HEK293 (cell line): ENCODE measurements at regions of chr1 and their contacts with region 1.

Region 1: DNA sequence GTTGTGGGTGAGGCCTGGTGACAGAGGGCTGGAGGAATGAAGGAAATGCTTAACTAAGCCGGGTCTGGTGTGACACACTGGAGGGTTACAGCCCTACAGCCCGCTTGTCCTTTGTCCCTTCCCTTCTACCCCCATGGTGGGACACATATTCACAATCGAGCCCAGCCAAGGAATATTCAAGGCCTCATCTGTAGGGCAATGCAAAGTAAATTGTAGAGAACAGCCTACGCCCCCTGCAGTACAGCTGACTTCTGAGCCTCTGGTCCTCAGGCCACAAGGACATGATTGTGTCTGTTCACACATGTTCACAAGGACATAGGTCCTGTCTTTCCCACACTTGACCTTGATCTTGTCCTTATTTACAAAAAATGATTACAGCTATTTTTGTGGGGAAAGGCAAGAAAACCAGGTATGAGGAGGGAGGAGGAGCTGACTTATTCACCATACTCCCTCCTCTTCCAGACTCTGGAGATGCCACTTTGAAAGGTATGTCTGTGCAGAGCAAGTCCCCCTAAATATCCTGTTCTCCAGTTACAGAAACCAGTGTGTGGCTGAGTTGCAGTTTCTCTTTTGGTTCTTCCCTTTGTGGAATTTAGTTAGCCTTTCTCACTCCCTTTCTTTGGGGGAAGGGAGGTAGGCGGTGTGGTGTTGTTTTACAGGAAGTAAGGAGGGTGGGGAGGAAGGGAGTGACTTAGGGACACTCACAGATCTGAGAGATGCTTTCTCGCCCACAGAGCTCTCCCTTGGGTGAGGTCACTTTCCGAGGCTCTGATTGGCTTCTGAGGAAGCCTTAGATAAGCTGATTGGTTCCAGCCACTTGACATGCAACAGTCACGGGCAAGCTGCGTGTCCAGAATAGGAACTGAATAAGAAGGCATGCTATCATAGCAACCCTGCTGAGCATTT is 14.6 kb downstream of the POLR3GL start:
- H3K4me3 ChIP-seq: no peak overlapping the region
- H3K27ac ChIP-seq: peak overlapping the region; percentile 60
- H3K4me1 ChIP-seq: peaks cover 6% of the 10 kb centered on the region
- CTCF ChIP-seq: no peak; the same call in 1 of the 2 replicates

Region 2: GRCh38 chr1:145804235-145805045 is 174.7 kb before region 1 on chr1:
- CTCF ChIA-PET with region 1: no interaction called
- POLR2A ChIA-PET with region 1: no interaction called
- H3K4me3 ChIP-seq: no peak overlapping the region
- H3K27ac ChIP-seq: no peak overlapping the region
- H3K4me1 ChIP-seq: peaks cover 15% of the 10 kb centered on the region
- CTCF ChIP-seq: no peak

Region 3: DNA sequence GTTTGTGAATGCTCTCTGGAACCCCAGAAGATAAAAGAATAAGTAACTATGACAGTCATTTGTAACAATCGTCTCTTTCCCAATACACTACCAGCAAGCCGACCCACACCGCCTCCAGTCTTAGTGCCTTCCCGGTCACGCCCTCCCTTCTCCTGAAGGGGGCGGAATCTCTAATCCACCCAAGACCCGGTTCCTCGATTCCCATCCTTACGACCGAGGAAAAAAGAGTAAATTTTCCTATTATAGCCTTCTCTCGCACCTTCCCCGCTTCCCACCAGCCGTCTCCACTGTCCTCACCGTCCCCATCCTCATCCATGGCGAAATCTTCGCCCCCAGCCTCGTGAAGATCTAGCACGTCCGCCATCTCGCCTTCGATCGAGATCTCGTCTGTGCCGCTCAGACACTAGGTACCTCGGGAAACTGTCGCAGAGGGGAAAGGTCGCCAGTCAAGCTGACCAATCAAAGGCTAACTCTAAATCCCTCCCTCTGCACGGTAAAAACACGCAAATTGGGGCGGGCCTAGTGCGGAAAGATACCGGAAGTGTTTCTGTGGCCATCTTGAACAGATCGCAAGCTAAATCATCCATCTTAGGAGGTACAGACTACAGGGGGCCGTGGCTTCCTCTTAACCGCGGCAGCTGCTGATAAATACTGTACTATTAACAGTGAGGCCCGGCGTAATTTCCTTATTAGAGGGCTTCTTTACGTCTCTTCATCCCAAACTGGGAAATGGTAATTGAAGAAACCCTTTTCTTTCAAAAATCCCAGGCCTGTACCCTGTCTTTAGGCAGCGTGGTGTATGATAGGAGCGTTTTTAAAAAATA is 51.8 kb before region 1 on chr1 and contains the start of gene RBM8A:
- CTCF ChIA-PET with region 1: interaction called, 3 read pairs
- POLR2A ChIA-PET with region 1: interaction called, 11 read pairs
- H3K4me3 ChIP-seq: peak within 1 kb of the TSS; percentile 83
- H3K27ac ChIP-seq: peak within 1 kb of the TSS; percentile 59
- H3K4me1 ChIP-seq: no peaks in the 10 kb centered on the region
- CTCF ChIP-seq: peak; percentile 98

Region 4: GRCh38 chr1:145963995-145964901 is 14.9 kb before region 1 on chr1 and contains the starts of genes ANKRD34A and POLR3GL:
- CTCF ChIA-PET with region 1: interaction called, 43 read pairs
- POLR2A ChIA-PET with region 1: interaction called, 30 read pairs
- H3K4me3 ChIP-seq: peak within 1 kb of the TSS; percentile 70
- H3K27ac ChIP-seq: peak within 1 kb of the TSS; percentile 16; the same call in 1 of the 2 replicates
- H3K4me1 ChIP-seq: peaks cover 9% of the 10 kb centered on the region
- CTCF ChIP-seq: no peak

Region 5: DNA sequence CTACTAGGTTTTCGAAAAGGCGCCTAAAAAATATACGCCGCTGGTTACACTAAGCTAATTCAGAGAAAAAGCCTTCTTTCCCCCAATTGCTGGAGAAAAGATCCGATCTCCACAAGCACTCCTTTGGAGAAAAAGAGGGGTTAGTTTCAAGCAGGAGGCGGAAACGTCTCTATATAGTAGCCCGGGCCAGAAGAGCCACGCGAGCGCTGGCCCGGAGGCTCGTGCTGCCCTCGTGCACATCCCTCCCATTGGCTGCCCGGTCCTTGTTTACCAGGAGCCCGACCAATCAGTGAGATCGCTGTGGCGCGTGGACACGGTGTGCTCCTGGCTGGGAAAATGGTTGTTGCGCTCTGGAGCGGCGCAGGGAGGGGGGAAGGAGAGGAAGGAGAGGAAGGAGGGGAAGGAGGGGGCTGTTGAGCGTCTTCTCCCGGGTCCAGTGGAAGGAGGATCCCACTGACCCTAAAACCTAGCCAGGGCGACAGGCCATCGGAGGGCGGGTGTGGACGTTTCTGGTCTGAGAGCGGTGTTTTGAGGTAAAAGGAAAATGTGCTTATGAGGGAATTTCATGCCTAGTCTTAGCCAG is 17.4 kb after region 1 on chr1 and contains the start of gene TXNIP:
- CTCF ChIA-PET with region 1: interaction called, 80 read pairs
- POLR2A ChIA-PET with region 1: interaction called, 12 read pairs
- H3K4me3 ChIP-seq: peak within 1 kb of the TSS; percentile 85
- H3K27ac ChIP-seq: peak within 1 kb of the TSS; percentile 59; the same call in 1 of the 2 replicates
- H3K4me1 ChIP-seq: peaks cover 12% of the 10 kb centered on the region
- CTCF ChIP-seq: no peak

Region 6: DNA sequence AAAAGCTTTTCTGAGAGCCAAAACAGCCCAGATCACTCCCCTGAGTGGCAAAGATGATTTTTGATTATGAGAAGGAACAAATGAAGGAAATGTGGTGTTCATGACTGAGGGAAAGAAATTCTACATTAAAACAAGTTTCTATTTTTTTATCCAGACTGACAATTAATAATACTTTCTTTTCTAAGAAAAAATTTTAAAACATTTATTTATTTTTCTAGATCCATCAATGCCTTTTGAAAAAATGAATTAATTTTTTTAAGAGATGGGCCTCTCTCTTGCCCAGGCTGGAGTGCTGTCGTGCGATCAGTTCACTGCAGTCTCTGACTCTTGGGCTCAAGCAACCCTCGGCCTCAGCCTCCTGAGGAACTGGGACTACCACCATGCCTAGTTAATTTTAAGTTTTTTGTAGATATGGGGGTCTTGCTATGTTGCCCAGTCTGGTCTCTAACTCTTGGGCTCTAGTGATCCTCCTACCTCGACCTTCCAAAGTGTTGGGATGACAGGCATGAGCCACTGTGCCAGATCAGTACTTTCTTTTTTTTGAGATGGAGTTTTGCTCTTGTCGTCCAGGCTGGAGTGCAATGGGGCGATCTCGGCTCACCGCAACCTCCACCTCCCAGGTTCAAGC is 28.5 kb after region 1 on chr1:
- CTCF ChIA-PET with region 1: interaction called, 227 read pairs
- POLR2A ChIA-PET with region 1: interaction called, 12 read pairs
- H3K4me3 ChIP-seq: no peak overlapping the region
- H3K27ac ChIP-seq: no peak overlapping the region
- H3K4me1 ChIP-seq: no peaks in the 10 kb centered on the region
- CTCF ChIP-seq: no peak